ENCODE measurements at regions of chr5 and their contacts with region 1.

Region 1: GRCh38 chr5:64784451-64785025 is 15.8 kb downstream of the CWC27 start:
- DNase-seq: peak; percentile 77 to 94 (median 88)
- H3K4me3 ChIP-seq: no peak overlapping the region
- H3K27ac ChIP-seq: no peak overlapping the region
- H3K4me1 ChIP-seq: no peaks in the 10 kb centered on the region
- H3K27me3 ChIP-seq: no peaks in the 10 kb centered on the region

Region 2: GRCh38 chr5:64634997-64635686 is 149.4 kb before region 1 on chr5:
- CTCF ChIA-PET with region 1: interaction called, 42 read pairs
- POLR2A ChIA-PET with region 1: no interaction called
- DNase-seq: peak; percentile 42 to 71 (median 58)
- H3K4me3 ChIP-seq: no peak overlapping the region
- H3K27ac ChIP-seq: no peak overlapping the region
- H3K4me1 ChIP-seq: peaks cover 0 to 11% (median 2%) of the 10 kb centered on the region in 4 experiments
- H3K27me3 ChIP-seq: peaks cover 0 to 4% (median 0%) of the 10 kb centered on the region in 5 experiments

Measured in common myeloid progenitor, CD34-positive (primary cell).